Activated T-helper 1 cell treated with anti-CD3 and anti-CD28 coated beads, Interleukin-12 subunit alpha, Interleukin-12 subunit beta, Interleukin-2, Interleukin-4 antibody, amounts not matched to agents 30 ng/mL and 10 ng/mL and 1 ng/mL, durations not matched to agents 14 hours and 24 hours and 36 hours (primary cell): ENCODE measurements at regions of chr19 and their contacts with region 1.

Region 1: GRCh38 chr19:45451131-45451849 is 16.5 kb upstream of the FOSB start:
- DNase-seq: peak; percentile 58
- H3K4me3 Mint-ChIP-seq: peak overlapping the region; percentile 75
- H3K27ac Mint-ChIP-seq: peak overlapping the region; percentile 92
- H3K4me1 Mint-ChIP-seq: peaks cover 38% of the 10 kb centered on the region
- H3K27me3 Mint-ChIP-seq: peaks cover 17% of the 10 kb centered on the region

Region 2: GRCh38 chr19:45469132-45469944 is 18.0 kb after region 1 on chr19:
- intact Hi-C with region 1: loop called (anchors 1 kb)
- DNase-seq: peak; percentile 92
- H3K4me3 Mint-ChIP-seq: peak overlapping the region; percentile 92
- H3K27ac Mint-ChIP-seq: peak overlapping the region; percentile 94
- H3K4me1 Mint-ChIP-seq: peaks cover 36% of the 10 kb centered on the region
- H3K27me3 Mint-ChIP-seq: peaks cover 33% of the 10 kb centered on the region

Region 3: DNA sequence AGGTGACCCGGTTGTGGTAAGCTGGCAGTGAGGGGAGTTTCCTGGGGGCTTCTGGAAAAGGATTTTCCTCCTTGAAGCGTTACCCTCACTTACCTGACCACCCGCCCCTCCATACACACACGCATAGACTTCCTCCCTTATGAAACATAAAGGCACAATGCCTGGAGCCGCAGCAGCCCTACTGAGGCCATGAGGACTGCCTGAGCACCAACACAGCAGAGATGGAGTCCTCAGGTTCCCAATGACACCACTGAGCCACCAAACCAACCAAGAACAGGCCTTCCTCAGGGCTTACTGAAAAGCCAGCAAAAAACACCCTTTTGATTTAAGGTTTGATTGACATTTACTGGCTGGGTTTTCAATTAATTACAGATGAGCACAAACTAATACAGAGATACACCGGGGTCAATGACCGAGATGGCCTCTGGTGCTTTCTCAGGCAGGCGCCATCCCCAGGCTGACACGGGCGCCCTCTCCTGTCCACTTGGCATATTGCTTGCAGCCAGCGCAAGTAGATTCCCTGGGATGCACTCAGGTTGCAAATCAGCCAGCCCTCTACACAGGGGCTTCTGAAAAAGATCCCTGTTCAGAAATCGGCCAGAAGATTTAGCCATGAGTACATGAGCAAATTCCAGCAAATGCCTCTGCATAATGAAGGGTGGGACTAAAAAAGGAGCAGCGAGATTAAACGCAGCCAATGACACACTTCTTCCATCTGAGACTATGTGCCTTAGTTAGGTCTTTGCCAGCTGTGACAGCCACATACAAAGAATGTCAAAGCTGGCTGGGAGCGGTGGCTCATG is 118.5 kb after region 1 on chr19:
- intact Hi-C with region 1: no loop called
- DNase-seq: peak; percentile 37
- H3K4me3 Mint-ChIP-seq: no peak overlapping the region
- H3K27ac Mint-ChIP-seq: no peak overlapping the region
- H3K4me1 Mint-ChIP-seq: peaks cover 8% of the 10 kb centered on the region
- H3K27me3 Mint-ChIP-seq: no peaks in the 10 kb centered on the region